ENCODE measurements at regions of chr20 and their contacts with region 1.

Region 1: GRCh38 chr20:21289651-21290050 is 13.5 kb upstream of the XRN2 start:
- DNase-seq: no peak

Region 2: DNA sequence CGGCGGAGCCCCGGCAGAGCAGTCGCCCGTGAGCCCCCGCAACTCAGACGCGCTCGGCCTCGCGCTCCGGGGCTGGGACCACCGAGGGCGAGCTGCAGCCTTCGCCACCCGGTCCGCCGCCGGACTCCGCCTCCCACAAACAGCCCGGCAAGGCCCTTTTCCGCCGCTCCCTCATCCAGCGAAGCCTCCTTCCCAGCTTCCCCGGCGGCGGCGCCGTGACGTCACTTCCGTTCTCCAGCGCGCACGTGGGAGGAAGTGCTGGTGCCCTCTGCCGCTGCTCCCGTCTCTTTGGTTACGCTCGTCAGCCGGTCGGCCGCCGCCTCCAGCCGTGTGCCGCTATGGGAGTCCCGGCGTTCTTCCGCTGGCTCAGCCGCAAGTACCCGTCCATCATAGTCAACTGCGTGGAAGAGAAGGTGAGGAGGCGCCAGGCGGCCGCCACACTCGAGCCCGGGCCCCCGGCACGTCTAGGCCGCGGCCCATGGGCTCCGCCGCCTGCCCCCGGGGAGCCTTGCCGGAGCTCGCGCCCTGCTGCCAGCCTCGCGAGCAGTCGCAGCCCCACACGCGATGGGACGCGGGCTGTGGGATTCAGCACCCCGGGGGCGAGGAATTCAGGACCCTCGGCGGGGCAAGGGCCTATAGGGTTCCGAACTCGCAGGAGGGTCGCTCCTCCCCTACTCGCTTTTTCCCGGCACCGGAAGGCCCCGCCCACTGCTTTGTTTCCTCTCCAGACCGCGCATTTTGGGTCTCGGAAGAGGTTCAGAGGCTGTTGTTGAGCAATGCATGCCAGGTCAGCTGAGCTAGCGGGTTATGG is 13.6 kb after region 1 on chr20 and contains the start of gene XRN2:
- CTCF ChIA-PET with region 1: no interaction called
- POLR2A ChIA-PET with region 1: interaction called, 14 read pairs
- DNase-seq: peak; percentile 90

Region 3: GRCh38 chr20:21315138-21315537 is 25.5 kb after region 1 on chr20:
- CTCF ChIA-PET with region 1: no interaction called
- POLR2A ChIA-PET with region 1: no interaction called
- DNase-seq: no peak

Measured in HEK293T (cell line).